Activated B cell treated with CpG ODN at 0.5 μM for 24 hours (primary cell): ENCODE measurements at regions of chr7 and their contacts with region 1.

Region 1: DNA sequence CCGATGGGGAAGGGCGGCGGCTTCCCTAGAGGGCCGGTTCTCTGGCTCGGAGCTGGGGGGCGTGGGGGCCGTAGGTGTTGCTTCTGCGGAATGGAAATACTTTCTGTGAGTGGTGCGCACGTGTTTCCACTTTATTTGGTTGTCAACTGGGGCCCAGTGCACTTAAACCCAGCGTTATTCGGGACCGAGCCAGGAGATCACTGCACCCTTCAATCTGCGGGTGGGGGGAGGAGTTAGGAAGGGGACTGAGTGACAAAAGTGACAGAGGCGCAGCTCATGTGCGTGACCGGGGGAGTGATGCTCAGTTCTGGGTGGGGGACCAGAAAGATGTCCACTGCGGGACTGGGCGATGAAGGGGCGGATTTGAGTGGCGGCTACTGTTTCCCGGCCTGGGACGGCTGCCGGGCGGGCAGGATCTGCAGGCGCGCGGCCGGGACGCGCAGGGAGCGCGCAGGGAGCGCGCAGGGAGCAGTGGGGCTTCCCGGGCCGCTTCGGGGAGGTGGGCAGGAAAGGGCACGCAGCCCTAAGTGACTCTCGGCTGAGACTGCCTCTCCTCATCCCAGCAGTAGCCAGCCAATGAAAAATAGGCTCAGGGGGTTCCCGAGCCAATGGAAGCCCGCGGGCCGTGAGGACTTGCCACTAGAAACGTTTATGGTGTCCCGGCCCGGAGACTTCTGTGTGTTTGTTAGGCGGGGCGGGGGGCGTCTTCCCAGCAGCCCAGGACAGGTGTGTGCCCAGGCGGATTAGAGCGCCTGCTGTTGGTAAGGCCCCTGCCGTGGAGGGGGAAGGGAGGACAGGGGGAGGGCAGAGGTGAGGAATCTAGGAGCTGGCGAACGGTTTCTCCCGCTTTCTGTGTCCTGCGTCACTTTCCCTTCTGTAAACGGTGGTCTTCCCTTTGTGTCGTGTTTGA is 54.3 kb upstream of the KDM7A start:
- DNase-seq: no peak
- ATAC-seq: peak; percentile 30
- H3K4me3 Mint-ChIP-seq: peak overlapping the region; percentile 91
- H3K27ac Mint-ChIP-seq: peak overlapping the region; percentile 95
- H3K4me1 Mint-ChIP-seq: peaks cover 59% of the 10 kb centered on the region
- H3K27me3 Mint-ChIP-seq: no peaks in the 10 kb centered on the region
- CTCF ChIP-seq: no peak

Region 2: DNA sequence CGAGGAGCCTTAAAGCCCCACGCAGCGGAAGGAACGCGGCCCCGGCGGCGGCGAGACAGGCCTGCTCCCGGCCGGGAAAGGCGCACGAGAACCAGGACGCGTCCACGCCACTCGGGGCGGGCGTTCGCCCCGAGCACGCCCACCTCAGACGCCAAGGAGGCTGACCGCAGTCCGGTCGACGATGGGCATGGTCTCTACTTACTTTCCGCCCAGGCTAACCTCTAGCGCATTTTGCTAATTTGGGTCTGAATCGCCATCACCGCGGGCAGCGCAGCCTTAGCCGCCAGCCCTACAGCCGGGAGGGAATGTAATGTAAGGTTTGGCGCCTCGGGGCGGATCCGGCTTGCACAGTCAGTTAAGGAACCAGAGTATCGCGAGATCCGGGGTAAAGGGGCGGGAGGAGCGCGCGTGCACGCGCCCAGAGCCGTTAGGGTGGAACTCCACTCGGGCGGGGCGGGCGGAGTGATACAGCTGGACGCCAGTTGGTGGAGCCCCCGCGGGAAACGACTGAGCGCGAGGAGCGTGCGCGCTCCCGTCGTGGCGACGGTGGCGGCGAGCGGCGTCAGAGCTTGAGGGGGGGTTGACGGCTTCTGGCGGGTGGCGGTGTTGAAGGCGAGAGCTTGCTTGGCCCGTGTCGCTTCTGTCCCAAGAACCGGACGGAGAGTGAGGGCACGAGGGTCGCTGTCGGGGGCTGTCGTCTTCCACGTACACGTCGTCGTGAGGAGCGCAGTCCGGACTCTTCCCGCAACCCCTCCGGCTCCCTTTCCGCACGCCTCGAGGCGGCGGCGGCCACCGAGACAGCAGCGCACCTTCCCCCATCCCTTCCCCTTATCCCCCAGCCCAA is 871.5 kb before region 1 on chr7 and contains the start of gene LUC7L2:
- CTCF ChIA-PET with region 1: no interaction called
- POLR2A ChIA-PET with region 1: no interaction called
- intact Hi-C with region 1: loop called (anchors 5 kb)
- DNase-seq: peak; percentile 97
- ATAC-seq: peak; percentile 78
- H3K4me3 Mint-ChIP-seq: peak within 1 kb of the TSS; percentile 98
- H3K27ac Mint-ChIP-seq: peak within 1 kb of the TSS; percentile 100
- H3K4me1 Mint-ChIP-seq: peaks cover 41% of the 10 kb centered on the region
- H3K27me3 Mint-ChIP-seq: no peaks in the 10 kb centered on the region
- CTCF ChIP-seq: no peak
- total RNA-seq, gene LUC7L2: 94.0 and 118 TPM in 2 replicates

Region 3: GRCh38 chr7:140209866-140210609 is 21.1 kb before region 1 on chr7:
- CTCF ChIA-PET with region 1: interaction called, 3 read pairs
- POLR2A ChIA-PET with region 1: interaction called, 168 read pairs
- intact Hi-C with region 1: loop called (anchors 1 kb)
- DNase-seq: peak; percentile 61
- ATAC-seq: peak; percentile 89
- H3K4me3 Mint-ChIP-seq: peak overlapping the region; percentile 73
- H3K27ac Mint-ChIP-seq: peak overlapping the region; percentile 97
- H3K4me1 Mint-ChIP-seq: peaks cover 86% of the 10 kb centered on the region
- H3K27me3 Mint-ChIP-seq: no peaks in the 10 kb centered on the region
- CTCF ChIP-seq: no peak

Region 4: GRCh38 chr7:140249036-140249806 is 18.1 kb after region 1 on chr7:
- CTCF ChIA-PET with region 1: no interaction called
- POLR2A ChIA-PET with region 1: no interaction called
- intact Hi-C with region 1: loop called (anchors 2 kb)
- DNase-seq: no peak
- ATAC-seq: no peak
- H3K4me3 Mint-ChIP-seq: no peak overlapping the region
- H3K27ac Mint-ChIP-seq: no peak overlapping the region
- H3K4me1 Mint-ChIP-seq: peaks cover 11% of the 10 kb centered on the region
- H3K27me3 Mint-ChIP-seq: no peaks in the 10 kb centered on the region
- CTCF ChIP-seq: no peak

Region 5: DNA sequence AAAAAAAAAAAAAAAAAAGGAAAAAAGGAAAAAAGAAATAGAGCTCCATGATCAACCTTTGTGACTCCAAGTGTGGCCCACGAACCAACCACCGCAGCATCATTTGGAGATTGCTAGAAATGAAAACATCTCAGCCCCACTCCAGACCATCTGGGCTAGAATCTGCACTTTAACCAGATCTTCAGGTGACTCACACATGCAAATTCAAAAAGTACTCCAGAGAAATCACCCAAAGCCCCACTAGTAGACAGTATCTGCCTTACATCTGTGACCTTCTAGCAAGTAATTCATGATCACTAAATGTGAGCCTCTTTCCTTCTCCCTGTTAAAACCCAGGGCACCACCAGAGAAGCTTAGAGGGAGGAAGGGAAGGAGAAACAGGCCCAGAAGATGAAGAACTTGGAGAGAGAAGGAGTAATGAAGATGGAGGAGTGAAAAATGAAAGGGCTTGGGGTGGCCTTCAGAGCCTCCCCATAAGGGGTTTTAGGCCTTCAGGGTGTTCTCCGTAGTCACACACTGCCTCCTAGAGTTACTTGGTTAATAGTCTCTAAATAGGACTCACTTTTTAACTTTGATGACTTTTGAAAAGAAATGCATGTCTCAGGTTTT is 73.2 kb after region 1 on chr7:
- CTCF ChIA-PET with region 1: no interaction called
- POLR2A ChIA-PET with region 1: interaction called, 12 read pairs
- intact Hi-C with region 1: loop called (anchors 1 kb)
- DNase-seq: no peak
- ATAC-seq: peak; percentile 96
- H3K4me3 Mint-ChIP-seq: peak overlapping the region; percentile 39
- H3K27ac Mint-ChIP-seq: peak overlapping the region; percentile 90
- H3K4me1 Mint-ChIP-seq: peaks cover 5% of the 10 kb centered on the region
- H3K27me3 Mint-ChIP-seq: no peaks in the 10 kb centered on the region
- CTCF ChIP-seq: no peak

Region 6: GRCh38 chr7:140397784-140398750 is 167.0 kb after region 1 on chr7 and contains the start of gene SLC37A3:
- CTCF ChIA-PET with region 1: no interaction called
- POLR2A ChIA-PET with region 1: no interaction called
- intact Hi-C with region 1: loop called (anchors 2 kb)
- DNase-seq: peak; percentile 85
- ATAC-seq: peak; percentile 96
- H3K4me3 Mint-ChIP-seq: peak within 1 kb of the TSS; percentile 88
- H3K27ac Mint-ChIP-seq: peak within 1 kb of the TSS; percentile 65
- H3K4me1 Mint-ChIP-seq: peaks cover 8% of the 10 kb centered on the region
- H3K27me3 Mint-ChIP-seq: peaks cover 1% of the 10 kb centered on the region
- CTCF ChIP-seq: no peak
- total RNA-seq, gene SLC37A3: 10.6 and 12.4 TPM in 2 replicates